Mammary epithelial cell (primary cell): ENCODE measurements at regions of chr12 and their contacts with region 1.

Region 1: GRCh38 chr12:65986047-65986446 is 144.5 kb downstream of the LLPH start:
- DNase-seq: no peak
- H3K4me3 ChIP-seq: no peak overlapping the region
- H3K27ac ChIP-seq: no peak overlapping the region
- H3K4me1 ChIP-seq: no peaks in the 10 kb centered on the region
- H3K27me3 ChIP-seq: no peaks in the 10 kb centered on the region
- CTCF ChIP-seq: no peak

Region 2: DNA sequence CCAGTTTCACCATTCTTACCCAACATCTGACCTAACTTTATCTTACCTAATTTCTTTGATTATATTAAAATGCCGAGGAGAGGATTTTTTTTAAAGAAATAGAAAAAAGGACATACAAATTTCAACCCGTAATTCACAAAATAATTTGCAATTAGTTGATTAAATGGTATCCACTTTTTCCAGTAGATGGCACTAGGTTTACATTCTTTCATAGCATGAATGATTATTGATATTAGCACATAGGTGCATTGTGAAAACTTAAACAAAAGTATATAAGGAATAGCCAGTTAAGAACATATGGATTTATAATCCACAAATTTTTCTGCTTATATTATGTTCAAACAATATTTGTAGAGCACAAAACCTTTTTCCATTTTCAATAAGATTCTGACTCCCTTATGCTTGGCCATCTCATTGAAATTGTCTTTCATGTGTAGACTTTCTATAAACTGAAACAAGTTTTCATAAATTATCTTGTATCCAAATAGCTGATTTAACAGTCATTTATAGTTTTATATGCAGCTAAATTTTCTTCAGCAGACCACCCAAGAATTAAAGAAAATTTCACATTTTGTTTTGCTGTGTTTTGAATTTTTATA is 672.2 kb before region 1 on chr12:
- CTCF ChIA-PET with region 1: no interaction called
- dilution Hi-C with region 1: no loop called
- in situ Hi-C with region 1: loop called in 1 of 2 experiments (anchors 25 kb)
- intact Hi-C with region 1: loop called (anchors 1 kb)
- DNase-seq: peak; percentile 19
- H3K4me3 ChIP-seq: no peak overlapping the region
- H3K27ac ChIP-seq: peak overlapping the region; percentile 2
- H3K4me1 ChIP-seq: peaks cover 3% of the 10 kb centered on the region
- H3K27me3 ChIP-seq: no peaks in the 10 kb centered on the region
- CTCF ChIP-seq: peak; percentile 59 to 67

Region 3: DNA sequence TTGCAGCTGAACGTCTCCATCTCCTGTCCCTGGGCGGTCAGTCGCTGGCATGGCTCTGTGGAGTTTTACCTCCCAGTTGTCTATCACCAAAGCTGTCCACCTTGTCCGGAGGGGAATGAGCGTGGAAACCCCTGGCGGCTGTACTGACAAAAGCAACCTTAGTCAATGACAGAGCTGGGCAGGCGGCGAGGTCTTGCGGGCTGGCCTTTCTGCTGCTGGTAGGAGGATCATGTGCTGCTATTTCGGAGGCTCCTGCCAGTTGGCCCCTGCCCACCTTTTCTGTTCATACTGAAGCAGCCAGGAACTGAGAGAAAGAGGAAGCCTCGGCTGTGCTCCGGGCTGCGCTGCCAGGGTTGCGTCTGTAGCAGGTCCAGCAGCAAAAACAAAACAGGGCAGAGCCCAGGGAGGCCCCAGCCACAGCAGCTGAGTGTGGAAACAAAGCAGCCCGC is 104.1 kb before region 1 on chr12:
- CTCF ChIA-PET with region 1: no interaction called
- dilution Hi-C with region 1: no loop called
- in situ Hi-C with region 1: no loop called
- intact Hi-C with region 1: loop called (anchors 10 kb)
- DNase-seq: no peak
- H3K4me3 ChIP-seq: no peak overlapping the region
- H3K27ac ChIP-seq: no peak overlapping the region
- H3K4me1 ChIP-seq: peaks cover 46% of the 10 kb centered on the region
- H3K27me3 ChIP-seq: no peaks in the 10 kb centered on the region
- CTCF ChIP-seq: peak in 1 of 2 donors; percentile 22

Region 4: DNA sequence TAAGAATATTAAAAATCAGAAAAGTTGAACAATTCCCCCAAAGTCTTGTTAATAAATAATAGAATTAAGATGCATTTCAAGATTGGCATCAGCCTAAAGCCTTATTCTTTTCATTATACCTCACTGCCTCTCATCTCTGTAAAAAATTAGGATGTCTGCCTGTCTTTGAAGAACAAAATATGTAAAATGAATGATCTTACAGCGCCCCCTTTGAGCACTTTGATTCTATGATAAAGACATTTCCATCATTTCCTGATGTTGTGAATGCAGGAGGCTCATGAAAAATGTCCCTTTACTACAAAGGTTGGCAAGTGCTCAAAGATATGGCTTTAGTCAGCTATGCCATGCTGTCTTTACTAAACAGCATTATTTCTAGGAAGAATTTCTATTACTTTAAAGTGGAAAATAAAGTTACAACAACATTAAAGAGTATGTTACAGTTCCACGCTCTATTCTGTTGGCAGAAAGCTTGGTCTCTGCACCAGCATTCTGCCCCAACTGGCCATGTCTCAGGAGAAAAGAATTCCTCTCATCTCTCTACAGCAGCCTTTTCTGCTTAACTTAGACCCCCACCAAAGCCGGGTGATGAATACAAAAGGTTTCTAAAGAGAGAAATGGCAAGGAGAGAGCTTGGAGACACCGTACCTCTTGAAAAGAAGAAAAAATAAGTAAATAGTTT is 49.4 kb after region 1 on chr12:
- CTCF ChIA-PET with region 1: no interaction called
- dilution Hi-C with region 1: no loop called
- in situ Hi-C with region 1: no loop called
- intact Hi-C with region 1: no loop called
- DNase-seq: peak; percentile 52
- H3K4me3 ChIP-seq: no peak overlapping the region
- H3K27ac ChIP-seq: peak overlapping the region; percentile 26
- H3K4me1 ChIP-seq: peaks cover 19% of the 10 kb centered on the region
- H3K27me3 ChIP-seq: no peaks in the 10 kb centered on the region
- CTCF ChIP-seq: peak; percentile 55 to 74

Region 5: GRCh38 chr12:66107451-66107915 is 121.4 kb after region 1 on chr12:
- CTCF ChIA-PET with region 1: no interaction called
- dilution Hi-C with region 1: no loop called
- in situ Hi-C with region 1: no loop called
- intact Hi-C with region 1: loop called (anchors 5 kb)
- DNase-seq: peak; percentile 91
- H3K4me3 ChIP-seq: no peak overlapping the region
- H3K27ac ChIP-seq: no peak overlapping the region
- H3K4me1 ChIP-seq: peaks cover 6% of the 10 kb centered on the region
- H3K27me3 ChIP-seq: no peaks in the 10 kb centered on the region
- CTCF ChIP-seq: peak; percentile 69 to 75